GM13977 (cell line): ENCODE measurements at regions of chr11 and their contacts with region 1.

Region 1: GRCh38 chr11:59669611-59670009 is 773 bp upstream of the PATL1 start:
- DNase-seq: no peak
- CTCF ChIP-seq: no peak

Region 2: DNA sequence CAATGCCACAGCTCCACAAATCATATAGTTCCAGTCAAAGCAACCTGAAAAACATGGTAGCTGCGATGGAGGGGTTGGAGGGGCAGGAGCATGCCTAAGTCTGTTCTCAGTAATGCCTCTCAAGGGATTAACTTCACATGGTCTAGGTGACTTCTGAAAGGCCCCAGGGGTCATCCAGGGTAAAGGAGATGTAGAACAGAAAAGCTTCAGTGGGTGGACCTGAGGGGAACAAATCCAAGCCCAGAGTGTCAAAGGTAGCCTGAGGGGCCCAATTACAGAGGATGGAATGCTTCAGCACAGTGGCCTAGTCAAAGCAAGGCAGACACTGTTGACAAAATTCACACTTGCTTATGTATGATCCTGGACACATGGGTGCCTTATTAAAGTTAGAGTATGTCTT is 134.9 kb before region 1 on chr11:
- in situ Hi-C with region 1: loop called (anchors 10 kb)
- DNase-seq: no peak
- CTCF ChIP-seq: no peak